ENCODE measurements at regions of chr9 and their contacts with region 1.

Region 1: DNA sequence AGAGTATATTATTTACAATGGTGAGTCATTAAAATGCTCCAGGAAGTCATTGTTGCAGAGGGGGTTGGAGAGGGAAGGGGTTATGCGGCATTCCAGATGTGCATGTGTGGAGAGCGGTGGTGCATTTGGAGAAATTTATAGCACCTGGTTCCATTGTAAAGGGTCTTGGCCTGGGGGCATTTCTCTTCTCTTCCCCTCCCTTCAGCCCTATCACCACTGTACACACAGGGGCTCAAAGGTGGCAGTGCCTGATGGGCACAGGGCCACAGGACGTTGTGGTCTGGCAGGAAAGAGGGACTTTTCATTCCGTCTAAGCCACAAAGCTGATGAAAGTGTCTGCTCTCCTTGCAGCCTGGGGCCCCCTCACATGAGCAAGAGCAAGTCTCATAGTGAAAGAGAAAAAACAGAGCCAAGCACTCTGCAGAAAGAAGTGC is 442.4 kb upstream of the ZNF462 start:
- DNase-seq: no peak

Region 2: DNA sequence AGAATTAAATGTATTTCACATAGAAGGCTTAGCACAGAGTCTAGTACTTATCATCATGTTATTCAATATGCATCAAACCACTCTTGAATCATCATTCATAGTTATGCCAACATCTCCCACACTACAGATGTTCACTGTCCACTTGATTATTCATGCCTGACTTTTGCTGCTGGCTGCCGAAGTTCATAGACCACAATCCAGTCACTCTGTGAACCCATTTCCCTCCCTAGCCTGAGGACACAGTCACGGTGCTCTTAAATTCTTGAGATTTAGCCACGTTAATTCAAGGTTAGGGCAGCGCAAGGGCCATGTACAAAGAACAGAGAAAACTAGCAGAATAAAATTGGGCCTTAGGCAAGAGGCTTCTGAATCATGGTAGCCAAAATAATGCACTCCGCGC is 1525.0 kb before region 1 on chr9:
- intact Hi-C with region 1: no loop called
- DNase-seq: no peak

Region 3: DNA sequence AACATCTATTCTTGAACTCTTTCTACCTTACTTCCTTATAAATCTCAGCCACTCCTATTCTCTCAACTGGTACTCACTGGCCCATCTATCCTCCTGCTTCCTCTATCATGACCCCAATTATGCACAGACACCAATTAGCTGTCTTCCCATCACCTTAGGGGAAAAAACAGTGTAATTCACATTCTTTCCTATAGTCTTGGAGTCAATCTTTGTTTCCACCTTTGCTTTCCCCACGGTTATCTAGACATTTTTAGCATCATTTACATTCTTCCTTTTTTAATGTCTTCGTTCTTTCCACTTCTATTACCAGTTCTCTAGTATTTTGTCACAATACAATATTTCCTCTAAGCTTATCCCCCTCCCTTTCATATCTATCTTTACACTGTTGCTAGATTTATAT is 276.7 kb before region 1 on chr9:
- intact Hi-C with region 1: no loop called
- DNase-seq: no peak

Region 4: GRCh38 chr9:108347463-108348188 is 1927.1 kb after region 1 on chr9:
- intact Hi-C with region 1: loop called in 1 of 2 experiments (anchors 10 kb)
- DNase-seq: no peak